Mammary epithelial cell (primary cell): ENCODE measurements at regions of chr12 and their contacts with region 1.

Region 1: GRCh38 chr12:55659486-55660385 is 23.0 kb downstream of the OR10P1 start:
- DNase-seq: no peak
- H3K4me3 ChIP-seq: no peak overlapping the region
- H3K27ac ChIP-seq: no peak overlapping the region
- H3K4me1 ChIP-seq: no peaks in the 10 kb centered on the region
- H3K27me3 ChIP-seq: no peaks in the 10 kb centered on the region
- CTCF ChIP-seq: peak; percentile 31 to 40

Region 2: GRCh38 chr12:55188974-55189556 is 470.7 kb before region 1 on chr12:
- CTCF ChIA-PET with region 1: no interaction called
- dilution Hi-C with region 1: no loop called
- in situ Hi-C with region 1: no loop called
- intact Hi-C with region 1: loop called (anchors 1 kb)
- DNase-seq: peak; percentile 55
- H3K4me3 ChIP-seq: no peak overlapping the region
- H3K27ac ChIP-seq: no peak overlapping the region
- H3K4me1 ChIP-seq: no peaks in the 10 kb centered on the region
- H3K27me3 ChIP-seq: peaks cover 5% of the 10 kb centered on the region
- CTCF ChIP-seq: peak; percentile 60 to 66